Dorsolateral prefrontal cortex (tissue), 120 donors: ENCODE measurements at regions of chr14 and their contacts with region 1.

Region 1: GRCh38 chr14:101809671-101810514 is 48.4 kb downstream of the PPP2R5C start:
- DNase-seq: peak; percentile 71 to 95 (median 86)
- H3K4me3 ChIP-seq: peak overlapping the region; percentile 44 to 99 (median 74)
- H3K27ac ChIP-seq: peak overlapping the region; percentile 90 to 100 (median 98)
- H3K27me3 ChIP-seq: no peaks in the 10 kb centered on the region
- CTCF ChIP-seq: peak in 3 of 56 donors; percentile 12 to 13 (median 12)

Region 2: GRCh38 chr14:101538878-101539277 is 271.0 kb before region 1 on chr14:
- intact Hi-C with region 1: no loop called
- DNase-seq: no peak
- H3K4me3 ChIP-seq: no peak overlapping the region
- H3K27ac ChIP-seq: no peak overlapping the region
- H3K27me3 ChIP-seq: peaks cover 0 to 3% (median 0%) of the 10 kb centered on the region in 45 donors
- CTCF ChIP-seq: no peak

Region 3: DNA sequence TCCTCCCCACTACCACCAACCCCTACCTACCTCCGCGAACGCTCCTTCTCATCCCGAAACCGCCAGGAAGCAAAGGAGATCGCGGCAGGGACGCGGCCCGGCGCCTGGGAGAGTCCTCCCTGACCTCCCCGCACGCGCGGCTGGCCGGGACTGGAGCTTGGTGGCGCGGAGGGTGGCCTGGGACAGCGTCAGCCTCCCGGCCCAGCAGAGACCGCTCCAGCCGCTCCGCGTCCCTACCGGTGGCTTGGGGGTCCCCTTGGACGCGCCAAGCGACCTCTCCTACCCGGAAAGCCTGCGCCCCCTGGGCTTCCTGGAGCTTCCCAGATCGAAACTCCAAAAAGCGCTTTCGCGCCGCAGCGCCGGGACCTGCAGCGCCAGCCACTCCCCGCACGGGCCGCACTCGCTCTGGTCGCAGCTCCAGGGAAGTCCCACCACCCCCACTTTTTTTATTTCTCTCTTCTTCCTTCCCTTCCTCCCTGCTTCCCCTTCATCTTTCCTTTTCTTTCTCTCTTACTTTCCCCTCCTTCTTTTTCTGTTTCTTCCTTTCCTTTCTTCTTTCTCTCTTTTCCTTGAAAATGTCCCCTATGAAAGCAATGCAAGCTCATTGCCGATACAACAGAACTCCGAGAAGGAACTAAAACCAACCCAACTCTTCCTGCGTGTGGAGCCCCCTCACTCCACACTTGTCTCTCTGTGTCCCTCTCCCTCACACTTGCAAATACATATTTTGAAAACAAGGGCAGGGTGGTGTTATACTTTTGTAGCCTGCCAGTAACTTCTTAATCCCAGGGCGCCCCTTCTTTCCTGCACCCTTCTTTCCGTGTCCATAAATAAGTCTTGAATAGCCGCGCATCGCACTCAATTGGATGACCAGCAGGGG is 244.8 kb before region 1 on chr14:
- intact Hi-C with region 1: no loop called
- DNase-seq: no peak
- H3K4me3 ChIP-seq: peak overlapping the region in 42 of 59 donors; percentile 7 to 53 (median 34)
- H3K27ac ChIP-seq: no peak overlapping the region
- H3K27me3 ChIP-seq: peaks cover 4 to 80% (median 64%) of the 10 kb centered on the region in 45 donors
- CTCF ChIP-seq: no peak

Region 4: GRCh38 chr14:101947906-101948665 is 138.2 kb after region 1 on chr14:
- intact Hi-C with region 1: loop called in 1 of 2 experiments (anchors 5 kb)
- DNase-seq: peak; percentile 97 to 100 (median 100)
- H3K4me3 ChIP-seq: peak overlapping the region; percentile 65 to 100 (median 87)
- H3K27ac ChIP-seq: peak overlapping the region; percentile 83 to 100 (median 98)
- H3K27me3 ChIP-seq: no peaks in the 10 kb centered on the region
- CTCF ChIP-seq: peak in 26 of 56 donors; percentile 3 to 51 (median 16)